HEK293 (cell line): ENCODE measurements at regions of chr7 and their contacts with region 1.

Region 1: DNA sequence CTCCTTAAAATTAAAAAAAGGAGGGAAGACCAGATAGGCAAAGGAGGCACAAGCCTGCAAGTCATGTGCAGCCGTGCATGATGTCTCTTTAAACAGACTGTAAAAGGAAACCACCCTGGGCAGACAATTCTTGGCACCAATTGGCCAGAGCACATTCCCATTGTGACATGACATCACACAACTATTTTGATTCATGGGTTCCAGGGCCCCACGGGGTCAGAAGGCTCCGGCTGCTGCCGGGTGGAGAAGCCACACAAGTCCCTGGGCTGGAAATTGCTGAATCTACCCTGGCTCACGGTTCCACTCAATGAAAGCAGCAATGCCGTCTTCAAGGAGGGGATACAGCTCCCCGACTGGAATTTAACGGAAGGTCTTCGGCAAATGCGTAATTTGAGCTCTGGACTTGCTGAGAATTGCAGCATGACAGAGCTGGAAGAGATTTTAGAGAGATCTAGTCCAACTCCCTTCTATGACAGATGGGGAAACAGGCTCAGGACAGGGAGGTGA is 140.5 kb downstream of the PRKAG2 start:
- H3K4me3 ChIP-seq: peak overlapping the region; percentile 11; the same call in 1 of the 2 replicates
- H3K27ac ChIP-seq: no peak overlapping the region
- H3K4me1 ChIP-seq: no peaks in the 10 kb centered on the region
- CTCF ChIP-seq: peak; percentile 71; the same call in 1 of the 2 replicates

Region 2: DNA sequence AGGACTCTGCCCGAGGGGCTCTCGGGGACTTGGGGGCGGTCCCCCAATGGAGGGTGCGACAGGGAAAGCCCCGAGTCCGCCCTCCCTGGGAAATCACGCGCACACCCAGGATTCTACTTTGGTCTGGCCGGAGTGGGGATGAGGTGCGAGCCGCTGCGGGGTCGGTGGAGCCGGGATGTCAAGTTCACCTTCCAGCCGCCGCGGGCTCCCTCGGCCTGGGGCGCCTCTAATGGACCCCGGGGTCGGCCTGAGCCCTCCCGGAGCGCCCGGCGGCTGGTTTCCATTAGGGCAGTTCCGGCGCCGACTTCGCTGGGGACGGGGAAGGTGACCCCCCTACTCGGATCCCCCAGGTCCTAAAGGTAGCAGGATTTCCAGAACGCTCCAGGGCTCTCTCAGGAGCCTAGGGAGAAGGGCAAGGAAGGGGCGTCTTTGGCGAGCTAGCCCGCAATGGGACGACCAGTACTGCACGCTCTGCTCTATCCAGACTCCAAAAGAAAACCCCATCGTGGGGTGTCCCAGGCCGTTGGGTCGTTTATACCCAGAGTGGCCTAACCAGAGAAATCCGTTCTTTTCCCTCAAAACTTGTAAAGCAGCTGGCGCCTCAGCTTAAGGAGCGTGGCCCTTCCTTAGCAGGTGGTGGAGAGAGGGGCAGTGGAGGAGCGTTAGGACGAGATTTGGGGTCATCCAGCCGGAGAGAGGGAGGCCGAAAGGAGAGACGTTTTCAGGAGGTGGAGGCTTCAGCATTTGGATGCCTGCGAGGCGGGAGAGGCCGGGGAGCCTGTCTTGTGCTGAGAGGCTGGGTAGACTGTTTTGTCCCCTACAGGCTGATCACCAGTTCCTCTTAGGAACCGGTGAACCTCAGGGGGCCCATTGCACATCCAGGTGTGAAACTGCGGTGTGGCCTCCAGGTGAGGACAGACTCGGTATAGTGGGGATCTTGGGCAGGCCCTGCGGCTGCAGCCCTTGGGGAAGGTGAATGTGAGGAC is 325.8 kb before region 1 on chr7:
- CTCF ChIA-PET with region 1: no interaction called
- POLR2A ChIA-PET with region 1: no interaction called
- H3K4me3 ChIP-seq: peak overlapping the region; percentile 56
- H3K27ac ChIP-seq: peak overlapping the region; percentile 63; the same call in 1 of the 2 replicates
- H3K4me1 ChIP-seq: no peaks in the 10 kb centered on the region
- CTCF ChIP-seq: no peak

Region 3: DNA sequence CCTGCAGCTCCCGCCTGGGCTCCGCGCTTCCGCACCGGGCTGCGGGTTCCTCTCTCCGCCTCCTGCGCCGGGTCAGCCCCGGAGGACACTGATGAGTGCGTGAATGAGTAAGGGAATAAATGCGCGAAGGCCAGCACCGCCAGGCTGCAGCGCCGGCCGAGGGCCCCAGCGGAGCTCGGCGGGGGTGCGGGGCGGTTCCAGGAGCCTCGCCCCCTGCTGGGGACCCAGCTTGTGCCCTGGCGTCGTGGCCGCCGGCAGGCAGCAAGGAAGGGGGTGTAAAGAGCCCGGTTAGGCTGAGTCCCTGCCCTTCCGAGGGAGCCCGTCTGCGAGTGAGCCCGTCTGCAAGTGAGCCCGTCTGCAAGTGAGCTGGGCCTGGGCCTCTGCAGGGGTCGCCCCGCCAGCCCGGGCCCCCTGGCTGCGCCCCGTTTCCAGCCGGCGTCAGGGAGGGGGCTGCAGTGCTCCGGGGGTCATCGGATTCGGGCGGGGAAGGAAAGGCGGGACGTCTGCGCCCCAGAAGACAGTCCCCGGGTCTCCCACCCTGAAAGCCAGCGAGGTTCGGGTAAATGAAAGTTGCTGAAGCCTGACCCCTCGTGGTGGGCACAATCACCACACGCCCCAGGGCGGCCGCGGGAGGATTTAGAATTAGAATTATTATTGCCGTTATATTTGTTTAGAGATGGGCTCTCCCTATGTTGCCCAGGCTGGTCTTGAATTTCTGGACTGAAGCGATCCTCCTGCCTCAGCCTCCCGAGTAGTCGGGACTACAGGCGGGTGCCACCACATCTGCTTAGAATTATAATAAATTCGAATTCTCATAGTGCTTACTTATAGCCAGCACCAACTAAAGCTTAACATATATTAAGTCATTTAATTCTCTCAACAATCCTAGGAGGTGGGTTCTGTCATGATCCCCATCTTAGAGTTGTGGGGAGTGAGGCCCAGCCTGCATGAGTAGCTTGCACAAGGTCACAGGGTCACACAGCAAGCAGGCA is 287.9 kb before region 1 on chr7:
- CTCF ChIA-PET with region 1: no interaction called
- POLR2A ChIA-PET with region 1: no interaction called
- H3K4me3 ChIP-seq: no peak overlapping the region
- H3K27ac ChIP-seq: no peak overlapping the region
- H3K4me1 ChIP-seq: no peaks in the 10 kb centered on the region
- CTCF ChIP-seq: no peak

Region 4: DNA sequence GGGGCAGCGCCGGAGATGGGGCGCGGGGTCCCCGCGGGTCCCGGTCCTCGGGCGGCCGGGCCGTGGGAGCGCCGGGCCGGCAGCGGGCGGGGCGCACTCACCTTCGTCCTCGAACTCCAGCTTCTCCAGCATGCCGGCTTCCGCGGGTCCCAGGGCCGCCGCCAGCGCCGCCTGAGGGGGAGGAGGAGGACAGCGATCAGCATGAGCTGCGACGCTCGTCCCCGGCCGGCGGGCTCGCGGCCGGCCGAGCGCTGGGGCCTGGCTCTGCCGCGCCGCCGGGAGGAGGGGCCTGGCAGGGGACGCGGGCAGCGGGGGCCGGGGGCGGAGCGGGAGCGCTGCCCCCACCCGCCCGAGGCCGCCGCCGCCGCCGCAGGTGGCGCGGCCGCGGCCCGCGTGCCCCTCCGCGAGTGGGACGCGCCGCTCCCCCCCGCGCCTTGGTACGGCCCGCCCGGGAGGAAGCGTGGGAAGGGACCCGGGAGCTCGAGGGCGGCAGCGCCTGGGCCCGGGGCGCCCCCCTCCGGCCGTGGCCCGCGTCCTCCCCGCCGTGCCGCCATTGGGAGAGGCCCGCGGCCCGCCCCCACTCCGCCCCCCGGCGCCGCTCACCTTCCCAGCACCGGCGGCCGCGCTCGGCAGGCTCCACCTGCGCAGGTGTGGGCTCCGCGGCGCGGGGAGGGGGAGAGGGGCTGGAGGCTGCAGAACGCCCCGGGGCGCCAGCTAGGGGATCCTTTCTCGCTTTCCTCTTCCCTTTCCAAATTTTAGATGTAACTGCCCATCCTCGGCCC is 104.3 kb before region 1 on chr7:
- CTCF ChIA-PET with region 1: interaction called, 12 read pairs
- POLR2A ChIA-PET with region 1: interaction called, 5 read pairs
- H3K4me3 ChIP-seq: peak overlapping the region; percentile 67
- H3K27ac ChIP-seq: peak overlapping the region; percentile 67; the same call in 1 of the 2 replicates
- H3K4me1 ChIP-seq: 0 out of 2 replicates have a peak, but pooled peaks cover 4% of the 10 kb centered on the region
- CTCF ChIP-seq: no peak